ENCODE measurements at regions of chr16 and their contacts with region 1.

Region 1: GRCh38 chr16:30922960-30923535 is 324 bp upstream of the FBXL19 start:
- DNase-seq: peak; percentile 95
- H3K4me3 Mint-ChIP-seq: peak overlapping the region; percentile 99
- H3K27ac Mint-ChIP-seq: peak overlapping the region; percentile 100
- H3K4me1 Mint-ChIP-seq: peaks cover 19% of the 10 kb centered on the region
- H3K27me3 Mint-ChIP-seq: no peaks in the 10 kb centered on the region

Region 2: DNA sequence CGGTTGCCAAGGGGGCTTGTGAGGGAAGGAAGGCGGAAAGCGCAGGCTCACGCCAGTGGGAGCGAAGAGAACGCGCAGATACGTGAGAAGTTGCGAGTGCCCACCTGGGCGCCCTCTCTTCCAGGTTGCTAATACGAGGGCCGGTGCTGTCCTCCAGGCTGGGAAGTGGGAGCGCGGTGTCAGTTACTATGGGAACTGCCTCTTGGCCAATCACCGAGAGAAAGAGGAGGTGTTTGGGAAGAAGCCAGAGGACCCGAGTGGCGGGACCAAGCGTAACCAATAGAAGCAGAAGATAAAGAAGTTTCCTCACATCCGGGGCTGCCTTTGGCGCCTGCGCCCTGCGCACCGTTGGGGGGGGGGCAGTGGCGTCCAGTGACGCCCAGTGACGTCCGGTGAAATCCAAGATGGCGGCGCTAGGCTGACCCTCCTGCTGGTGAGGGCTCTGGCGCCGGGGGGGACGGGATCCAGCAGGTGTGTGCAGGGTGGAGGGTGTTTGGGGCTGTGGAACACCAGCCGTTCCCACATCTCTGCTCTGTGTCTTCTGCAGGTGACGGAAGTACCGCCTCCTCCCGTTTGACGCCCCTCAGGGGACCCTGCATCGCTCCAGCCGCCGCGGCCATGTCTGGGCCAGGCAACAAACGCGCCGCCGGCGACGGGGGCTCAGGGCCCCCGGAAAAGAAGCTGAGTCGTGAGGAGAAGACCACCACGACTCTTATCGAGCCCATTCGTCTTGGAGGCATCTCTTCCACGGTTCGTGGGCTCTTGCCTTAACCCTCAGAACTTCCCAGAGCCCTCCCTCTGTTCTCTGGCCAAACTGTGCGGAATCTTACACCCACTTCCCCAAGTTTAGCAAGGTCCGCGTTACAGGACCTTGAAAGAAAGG is 160.9 kb before region 1 on chr16 and contains the starts of genes CFAP119 and RNF40:
- intact Hi-C with region 1: loop called (anchors 1 kb)
- DNase-seq: peak; percentile 95
- H3K4me3 Mint-ChIP-seq: peak within 1 kb of the TSS; percentile 85
- H3K27ac Mint-ChIP-seq: peak within 1 kb of the TSS; percentile 83
- H3K4me1 Mint-ChIP-seq: peaks cover 17% of the 10 kb centered on the region
- H3K27me3 Mint-ChIP-seq: no peaks in the 10 kb centered on the region
- total RNA-seq, gene CFAP119: 2.3 and 2.8 TPM in 2 replicates
- total RNA-seq, gene RNF40: 83.8 and 91.6 TPM in 2 replicates

Region 3: GRCh38 chr16:30893744-30894539 is 29.1 kb before region 1 on chr16 and contains the start of gene BCL7C:
- intact Hi-C with region 1: loop called (anchors 1 kb)
- DNase-seq: peak; percentile 82
- H3K4me3 Mint-ChIP-seq: peak within 1 kb of the TSS; percentile 91
- H3K27ac Mint-ChIP-seq: peak within 1 kb of the TSS; percentile 83
- H3K4me1 Mint-ChIP-seq: peaks cover 26% of the 10 kb centered on the region
- H3K27me3 Mint-ChIP-seq: no peaks in the 10 kb centered on the region
- total RNA-seq, gene BCL7C: 26.8 and 27.1 TPM in 2 replicates

Region 4: DNA sequence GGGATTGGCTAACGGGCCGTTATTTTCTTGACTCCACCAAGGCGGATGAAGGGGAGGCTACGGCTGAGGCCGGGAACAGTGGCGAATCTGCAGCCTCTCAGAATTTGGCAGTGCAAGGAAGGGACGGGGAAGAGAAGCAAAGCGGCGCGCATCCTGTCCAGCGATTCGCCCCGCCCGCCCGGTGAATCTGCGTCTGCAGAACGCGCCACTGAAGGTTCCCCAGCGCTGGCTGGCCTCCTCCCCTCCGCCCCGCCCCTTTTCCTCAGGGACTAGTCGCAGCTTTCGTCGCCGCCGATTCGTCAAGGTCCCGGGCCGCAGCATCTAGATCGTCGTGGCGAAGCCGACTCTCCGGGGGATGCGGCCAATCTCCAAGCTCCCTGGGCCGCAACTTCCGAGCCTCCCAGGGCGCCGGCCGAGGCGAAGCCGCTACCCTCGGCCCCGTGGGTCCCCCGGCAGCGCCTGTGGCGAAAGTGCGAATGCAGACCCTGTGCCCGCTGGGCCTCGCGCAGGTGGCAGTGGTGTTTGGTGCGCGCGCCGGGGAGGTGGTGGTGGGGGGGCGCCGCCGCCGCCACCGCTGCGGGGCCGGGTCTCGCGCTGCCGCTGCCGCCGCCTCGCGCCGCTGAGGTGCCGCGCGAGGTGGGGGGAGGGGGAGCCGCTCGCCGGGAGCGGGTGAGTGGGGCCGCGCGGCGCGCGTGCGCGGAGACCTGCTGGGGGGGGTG is 34.6 kb after region 1 on chr16 and contains the start of gene SETD1A:
- intact Hi-C with region 1: loop called (anchors 1 kb)
- DNase-seq: peak; percentile 94
- H3K4me3 Mint-ChIP-seq: peak within 1 kb of the TSS; percentile 95
- H3K27ac Mint-ChIP-seq: peak within 1 kb of the TSS; percentile 99
- H3K4me1 Mint-ChIP-seq: peaks cover 26% of the 10 kb centered on the region
- H3K27me3 Mint-ChIP-seq: no peaks in the 10 kb centered on the region
- total RNA-seq, gene SETD1A: 28.9 TPM in 2 replicates

Region 5: DNA sequence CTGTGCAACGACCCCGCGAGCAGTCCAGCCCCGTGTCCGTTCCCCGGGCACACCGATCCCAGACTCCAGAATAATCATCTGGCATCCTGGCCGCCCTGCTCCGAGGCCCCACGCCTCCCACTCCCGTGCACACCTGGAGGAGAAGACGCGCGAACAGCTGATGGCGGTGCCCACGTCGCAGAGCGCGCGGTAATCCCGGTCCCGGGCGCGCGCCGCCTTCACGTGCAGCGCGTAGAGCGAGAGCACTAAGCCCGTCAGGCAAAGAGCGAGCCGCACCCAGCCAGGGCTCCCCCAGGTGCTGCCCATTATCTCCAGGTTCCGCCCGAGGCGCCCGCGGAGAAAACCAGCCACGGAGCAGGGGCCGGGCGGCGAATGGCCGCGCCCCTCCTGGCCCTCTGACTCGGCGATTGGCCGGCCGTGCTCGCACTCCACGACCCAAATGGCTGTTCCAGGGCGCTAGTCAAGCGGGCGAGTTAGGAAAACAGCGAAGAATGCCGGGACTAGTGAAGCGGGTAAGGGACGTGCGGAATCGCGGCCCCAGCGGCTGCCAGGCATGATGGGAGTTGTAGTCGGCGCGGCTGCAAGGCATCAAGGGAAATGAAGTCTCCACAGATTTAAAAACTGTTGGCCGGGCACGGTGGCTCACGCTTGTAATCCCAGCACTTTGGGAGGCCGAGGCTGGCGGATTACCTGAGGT is 171.5 kb after region 1 on chr16 and contains the start of gene VKORC1:
- intact Hi-C with region 1: loop called (anchors 1 kb)
- DNase-seq: peak; percentile 85
- H3K4me3 Mint-ChIP-seq: peak within 1 kb of the TSS; percentile 99
- H3K27ac Mint-ChIP-seq: peak within 1 kb of the TSS; percentile 83
- H3K4me1 Mint-ChIP-seq: peaks cover 20% of the 10 kb centered on the region
- H3K27me3 Mint-ChIP-seq: no peaks in the 10 kb centered on the region
- total RNA-seq, gene VKORC1: 54.5 and 60.0 TPM in 2 replicates